HEK293 (cell line): ENCODE measurements at regions of chr20 and their contacts with region 1.

Region 1: GRCh38 chr20:19583532-19584175 is 174.4 kb upstream of the RIN2 start:
- H3K4me3 ChIP-seq: no peak overlapping the region
- H3K27ac ChIP-seq: no peak overlapping the region
- H3K4me1 ChIP-seq: no peaks in the 10 kb centered on the region
- CTCF ChIP-seq: no peak

Region 2: DNA sequence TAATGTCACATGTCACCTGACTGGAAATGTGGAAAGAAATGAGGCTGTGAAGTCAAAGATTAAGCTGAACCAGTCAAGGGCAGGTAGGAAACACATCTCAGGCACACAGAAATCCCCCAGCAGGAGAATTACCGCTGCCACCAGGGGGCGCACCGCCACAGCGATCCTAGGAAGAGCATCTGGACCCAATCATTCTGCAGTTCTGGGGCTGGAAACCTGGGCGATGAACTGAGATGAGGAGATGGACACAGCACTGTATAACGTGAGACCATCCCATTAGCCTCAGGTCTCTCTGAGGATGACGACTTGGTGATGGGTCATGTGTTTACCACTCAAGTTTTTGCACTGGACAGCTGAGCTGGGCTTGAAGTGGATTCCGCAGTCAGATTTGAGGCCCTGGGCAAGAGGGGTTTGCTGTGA is 377.7 kb before region 1 on chr20:
- CTCF ChIA-PET with region 1: interaction called, 65 read pairs
- POLR2A ChIA-PET with region 1: no interaction called
- H3K4me3 ChIP-seq: no peak overlapping the region
- H3K27ac ChIP-seq: no peak overlapping the region
- H3K4me1 ChIP-seq: no peaks in the 10 kb centered on the region
- CTCF ChIP-seq: peak; percentile 56

Region 3: DNA sequence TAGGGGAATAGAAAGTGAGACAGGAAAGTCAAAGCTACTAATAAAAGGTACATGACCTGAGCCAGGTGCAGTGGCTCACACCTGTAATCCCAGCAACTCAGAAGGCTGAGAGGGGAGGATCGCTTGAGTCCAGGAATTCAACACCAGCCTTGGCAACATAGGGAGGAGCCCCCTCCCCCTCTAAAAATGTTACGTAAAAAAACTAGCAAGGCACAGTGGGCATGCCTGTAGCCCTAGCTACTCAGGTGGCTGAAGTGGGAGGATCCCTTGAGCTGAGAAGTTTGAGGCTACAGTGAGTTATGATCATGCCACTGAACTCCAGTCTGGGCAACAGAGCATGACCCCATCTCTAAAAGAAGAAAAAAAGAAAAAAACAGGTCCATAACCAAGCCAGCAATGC is 11.7 kb before region 1 on chr20:
- CTCF ChIA-PET with region 1: interaction called, 30 read pairs
- POLR2A ChIA-PET with region 1: no interaction called
- H3K4me3 ChIP-seq: no peak overlapping the region
- H3K27ac ChIP-seq: no peak overlapping the region
- H3K4me1 ChIP-seq: no peaks in the 10 kb centered on the region
- CTCF ChIP-seq: no peak

Region 4: DNA sequence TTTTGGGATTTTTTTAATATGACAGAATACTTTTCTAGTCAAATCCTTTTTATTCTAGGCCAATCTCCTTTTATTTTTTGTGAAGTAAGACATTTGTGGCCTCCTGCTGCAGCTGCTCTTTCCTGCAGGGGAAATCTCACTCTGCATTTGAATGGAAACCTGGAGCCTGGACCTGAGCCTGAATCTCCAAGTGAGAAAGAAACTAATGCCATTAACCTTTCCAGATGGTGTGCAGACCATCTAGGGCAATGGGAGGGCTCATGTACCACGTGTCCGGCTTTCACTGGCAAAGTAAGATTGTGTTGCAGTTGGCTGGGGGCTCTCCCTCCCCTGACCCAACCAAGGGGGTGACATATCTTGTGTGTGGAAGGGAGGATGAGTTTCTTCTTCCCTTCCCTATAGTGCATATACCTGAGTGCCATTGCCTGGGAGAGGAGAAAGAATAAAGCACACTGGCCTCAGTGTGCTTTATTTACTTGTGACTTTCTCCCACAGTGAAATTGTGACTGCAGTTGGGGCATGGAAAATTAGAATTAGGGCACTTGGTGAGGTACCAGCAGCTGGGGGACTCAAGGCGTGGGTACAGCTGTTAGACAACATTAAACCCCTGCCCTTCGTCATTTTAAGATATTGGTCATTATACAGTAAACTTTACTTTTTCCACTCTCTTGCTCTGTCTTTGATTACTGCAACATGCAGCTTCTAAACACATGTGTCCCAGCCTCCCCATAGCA is 14.6 kb after region 1 on chr20:
- CTCF ChIA-PET with region 1: interaction called, 10 read pairs
- POLR2A ChIA-PET with region 1: no interaction called
- H3K4me3 ChIP-seq: no peak overlapping the region
- H3K27ac ChIP-seq: no peak overlapping the region
- H3K4me1 ChIP-seq: no peaks in the 10 kb centered on the region
- CTCF ChIP-seq: no peak

Region 5: DNA sequence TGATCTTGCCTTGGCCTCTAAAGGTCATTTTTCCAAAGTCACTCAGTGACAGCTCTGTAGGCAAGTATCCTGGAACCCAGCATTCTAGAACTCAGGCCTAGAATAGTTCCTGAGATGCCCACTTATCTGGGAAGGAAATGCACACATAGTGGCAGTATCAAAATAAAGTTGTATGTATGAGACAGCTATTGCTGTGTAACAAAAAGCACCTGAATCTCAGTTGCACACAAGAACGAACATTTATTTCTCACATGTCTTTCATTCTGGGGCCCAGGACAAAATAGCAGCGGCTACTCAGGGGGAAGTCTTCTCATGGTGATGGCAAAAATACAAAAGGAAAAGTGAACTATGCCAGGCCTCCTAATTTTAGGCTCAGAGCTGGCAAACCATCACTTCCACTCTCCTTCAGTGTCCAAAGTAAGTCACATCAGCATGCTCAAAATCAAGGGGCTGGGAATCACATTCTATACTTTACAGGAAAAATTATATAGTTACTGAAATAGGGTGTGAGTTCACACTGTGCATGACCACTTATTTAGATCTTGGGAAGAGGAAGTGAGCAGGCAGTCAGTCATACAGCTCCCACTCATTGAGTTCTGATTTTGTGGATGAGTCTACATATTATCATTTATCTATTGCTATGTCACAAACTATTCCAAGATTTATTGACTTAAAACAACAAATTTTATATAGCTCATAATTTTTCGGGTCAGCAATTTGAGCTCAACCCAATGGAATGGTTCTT is 40.7 kb after region 1 on chr20:
- CTCF ChIA-PET with region 1: no interaction called
- POLR2A ChIA-PET with region 1: no interaction called
- H3K4me3 ChIP-seq: no peak overlapping the region
- H3K27ac ChIP-seq: no peak overlapping the region
- H3K4me1 ChIP-seq: no peaks in the 10 kb centered on the region
- CTCF ChIP-seq: no peak

Region 6: DNA sequence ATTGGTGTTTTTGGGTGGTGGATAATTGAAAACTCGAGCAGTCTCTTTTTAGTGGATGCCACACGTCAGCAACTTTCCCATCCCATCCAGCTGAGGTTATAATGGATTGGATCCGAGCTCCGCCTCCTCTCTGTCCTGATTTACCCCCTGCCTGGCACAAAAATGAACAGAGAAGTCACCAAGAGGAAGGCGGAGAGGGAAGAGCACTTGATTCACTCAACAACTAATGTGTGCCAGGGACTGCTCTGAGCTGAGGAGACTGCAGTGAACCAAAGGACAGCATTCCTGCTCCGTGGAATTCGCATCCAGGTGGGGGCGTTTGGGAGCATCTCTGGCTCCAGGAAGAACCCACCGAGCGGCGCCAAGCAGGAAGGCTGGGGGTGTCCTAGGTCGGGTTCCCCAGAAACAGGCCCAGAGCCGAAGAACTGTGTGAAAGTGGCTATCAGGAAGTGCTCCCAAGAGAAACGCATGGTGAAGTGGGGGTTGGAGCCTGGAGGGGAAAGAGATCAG is 337.7 kb after region 1 on chr20:
- CTCF ChIA-PET with region 1: no interaction called
- POLR2A ChIA-PET with region 1: no interaction called
- H3K4me3 ChIP-seq: no peak overlapping the region
- H3K27ac ChIP-seq: no peak overlapping the region
- H3K4me1 ChIP-seq: no peaks in the 10 kb centered on the region
- CTCF ChIP-seq: no peak